Heart left ventricle (tissue), 16 donors: ENCODE measurements at regions of chr6 and their contacts with region 1.

Region 1: DNA sequence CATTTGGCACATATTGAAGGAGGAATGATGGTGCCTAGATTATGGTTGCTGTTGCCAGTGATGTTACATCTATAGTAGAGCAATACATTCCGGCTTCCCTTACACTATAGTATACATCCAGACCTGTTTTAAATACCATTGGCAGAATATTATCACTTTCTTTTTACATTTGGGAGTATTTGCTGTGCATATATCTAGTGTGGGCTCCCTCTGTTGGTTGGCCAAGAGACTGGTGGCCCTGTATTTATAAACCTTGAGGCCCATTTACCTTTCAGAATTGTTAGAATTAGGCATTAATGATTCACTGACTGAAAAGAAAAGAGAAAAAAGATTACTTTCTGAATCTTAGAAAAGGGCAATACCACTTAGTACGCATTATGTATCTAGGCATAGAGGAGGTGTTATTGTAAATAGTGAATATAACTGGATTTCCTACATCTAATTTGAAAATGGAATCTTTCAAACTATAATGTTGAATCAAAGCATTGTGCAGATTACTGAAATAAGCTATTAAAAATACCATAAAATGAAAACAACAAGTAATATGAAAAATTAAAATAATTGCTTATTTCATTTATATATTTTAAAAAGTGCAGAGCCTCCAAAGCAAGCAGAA is 628.8 kb upstream of the MAN1A1 start:
- DNase-seq: no peak
- ATAC-seq: no peak
- H3K4me3 ChIP-seq: no peak overlapping the region
- H3K27ac ChIP-seq: no peak overlapping the region
- H3K4me1 ChIP-seq: no peaks in the 10 kb centered on the region
- H3K27me3 ChIP-seq: no peaks in the 10 kb centered on the region
- CTCF ChIP-seq: peak in 11 of 12 donors; percentile 12 to 54 (median 34)
- POLR2A ChIP-seq: no peak

Region 2: GRCh38 chr6:119742188-119742803 is 236.1 kb before region 1 on chr6:
- intact Hi-C with region 1: loop called in 2 of 10 experiments (anchors 5 to 10 kb)
- DNase-seq: peak; percentile 30 to 70 (median 40)
- ATAC-seq: peak in 3 of 4 donors; percentile 50 to 63 (median 61)
- H3K4me3 ChIP-seq: no peak overlapping the region
- H3K27ac ChIP-seq: no peak overlapping the region
- H3K4me1 ChIP-seq: no peaks in the 10 kb centered on the region
- H3K27me3 ChIP-seq: no peaks in the 10 kb centered on the region
- CTCF ChIP-seq: peak; percentile 55 to 85 (median 78)
- POLR2A ChIP-seq: no peak

Region 3: DNA sequence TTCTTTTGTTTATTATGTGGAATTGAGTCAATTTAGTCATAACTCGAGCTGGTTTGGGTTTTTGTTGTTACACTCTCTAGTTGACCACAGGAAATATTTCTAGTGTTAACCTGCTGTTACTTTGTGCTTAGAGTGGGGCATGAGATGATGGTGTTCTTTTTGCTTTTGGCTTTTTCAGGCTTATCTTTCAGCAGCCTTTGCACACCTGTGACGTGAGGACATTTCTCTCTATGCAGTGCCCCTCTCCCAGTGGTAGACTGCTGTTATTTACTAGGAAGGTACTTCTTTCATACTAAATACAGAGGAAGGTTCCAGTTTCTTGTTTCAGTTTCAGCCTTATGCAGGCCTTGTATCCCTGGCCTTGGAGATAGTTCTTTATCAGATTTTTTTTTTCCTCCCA is 138.0 kb after region 1 on chr6:
- intact Hi-C with region 1: no loop called
- DNase-seq: no peak
- ATAC-seq: no peak
- H3K4me3 ChIP-seq: no peak overlapping the region
- H3K27ac ChIP-seq: no peak overlapping the region
- H3K4me1 ChIP-seq: no peaks in the 10 kb centered on the region
- H3K27me3 ChIP-seq: no peaks in the 10 kb centered on the region
- CTCF ChIP-seq: no peak
- POLR2A ChIP-seq: no peak